ENCODE measurements at regions of chr11 and their contacts with region 1.

Region 1: GRCh38 chr11:102451681-102452460 is 694 bp downstream of the TMEM123 start:
- DNase-seq: peak; percentile 70
- H3K4me3 ChIP-seq: peak overlapping the region; percentile 72 to 98 (median 91)
- H3K27ac ChIP-seq: peak overlapping the region; percentile 83
- H3K4me1 ChIP-seq: peaks cover 55% of the 10 kb centered on the region
- H3K27me3 ChIP-seq: no peaks in the 10 kb centered on the region
- CTCF ChIP-seq: no peak
- POLR2A ChIP-seq: no peak

Region 2: GRCh38 chr11:102109896-102110760 is 341.7 kb before region 1 on chr11 and contains the start of gene YAP1:
- CTCF ChIA-PET with region 1: no interaction called
- POLR2A ChIA-PET with region 1: no interaction called
- dilution Hi-C with region 1: no loop called
- intact Hi-C with region 1: loop called (anchors 2 kb)
- DNase-seq: peak; percentile 89
- H3K4me3 ChIP-seq: peak within 1 kb of the TSS; percentile 85 to 99 (median 88)
- H3K27ac ChIP-seq: peak within 1 kb of the TSS; percentile 72
- H3K4me1 ChIP-seq: peaks cover 11% of the 10 kb centered on the region
- H3K27me3 ChIP-seq: peaks cover 2 to 18% of the 10 kb centered on the region in 2 experiments
- CTCF ChIP-seq: no peak
- POLR2A ChIP-seq: no peak
- total RNA-seq, gene YAP1: 36.5 and 48.9 TPM in 2 replicates

Region 3: GRCh38 chr11:102390667-102391465 is 61.0 kb before region 1 on chr11:
- CTCF ChIA-PET with region 1: interaction called, 16 read pairs
- POLR2A ChIA-PET with region 1: no interaction called
- dilution Hi-C with region 1: no loop called
- intact Hi-C with region 1: loop called (anchors 5 kb)
- DNase-seq: peak; percentile 63
- H3K4me3 ChIP-seq: no peak overlapping the region
- H3K27ac ChIP-seq: no peak overlapping the region
- H3K4me1 ChIP-seq: peaks cover under 1% of the 10 kb centered on the region
- H3K27me3 ChIP-seq: no peaks in the 10 kb centered on the region
- CTCF ChIP-seq: peak; percentile 83 to 88
- POLR2A ChIP-seq: no peak

Region 4: GRCh38 chr11:102399189-102399588 is 52.7 kb before region 1 on chr11:
- CTCF ChIA-PET with region 1: no interaction called
- POLR2A ChIA-PET with region 1: no interaction called
- dilution Hi-C with region 1: no loop called
- intact Hi-C with region 1: loop called (anchors 2 kb)
- DNase-seq: no peak
- H3K4me3 ChIP-seq: no peak overlapping the region
- H3K27ac ChIP-seq: no peak overlapping the region
- H3K4me1 ChIP-seq: no peaks in the 10 kb centered on the region
- H3K27me3 ChIP-seq: no peaks in the 10 kb centered on the region
- CTCF ChIP-seq: no peak
- POLR2A ChIP-seq: no peak

Region 5: DNA sequence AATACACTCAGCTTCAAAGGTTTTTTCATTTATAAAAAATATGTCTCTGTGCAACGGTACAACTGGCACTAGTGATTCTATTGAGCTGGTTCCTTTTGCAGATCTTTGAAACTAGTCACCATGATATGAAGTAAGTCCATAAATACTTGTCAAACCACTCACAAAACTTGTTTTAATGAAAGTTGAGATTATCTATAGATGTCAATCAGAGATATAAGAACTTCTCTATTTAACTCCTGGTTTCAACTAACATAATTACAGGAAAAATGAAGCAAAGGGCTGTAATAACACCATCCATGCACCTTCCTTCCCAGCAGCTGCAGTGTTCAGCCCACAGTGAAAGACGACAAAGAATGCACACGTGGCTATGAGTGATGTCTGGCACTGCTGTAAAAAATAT is 44.0 kb before region 1 on chr11:
- CTCF ChIA-PET with region 1: interaction called, 3 read pairs
- POLR2A ChIA-PET with region 1: no interaction called
- dilution Hi-C with region 1: no loop called
- intact Hi-C with region 1: loop called (anchors 1 kb)
- DNase-seq: peak; percentile 44
- H3K4me3 ChIP-seq: no peak overlapping the region
- H3K27ac ChIP-seq: no peak overlapping the region
- H3K4me1 ChIP-seq: no peaks in the 10 kb centered on the region
- H3K27me3 ChIP-seq: no peaks in the 10 kb centered on the region
- CTCF ChIP-seq: no peak
- POLR2A ChIP-seq: no peak

Region 6: GRCh38 chr11:102495161-102496042 is 43.5 kb after region 1 on chr11:
- CTCF ChIA-PET with region 1: interaction called, 3 read pairs
- POLR2A ChIA-PET with region 1: no interaction called
- dilution Hi-C with region 1: no loop called
- intact Hi-C with region 1: loop called (anchors 1 kb)
- DNase-seq: peak; percentile 77
- H3K4me3 ChIP-seq: no peak overlapping the region
- H3K27ac ChIP-seq: no peak overlapping the region
- H3K4me1 ChIP-seq: peaks cover 13% of the 10 kb centered on the region
- H3K27me3 ChIP-seq: no peaks in the 10 kb centered on the region
- CTCF ChIP-seq: peak; percentile 30 to 51
- POLR2A ChIP-seq: no peak

Region 7: DNA sequence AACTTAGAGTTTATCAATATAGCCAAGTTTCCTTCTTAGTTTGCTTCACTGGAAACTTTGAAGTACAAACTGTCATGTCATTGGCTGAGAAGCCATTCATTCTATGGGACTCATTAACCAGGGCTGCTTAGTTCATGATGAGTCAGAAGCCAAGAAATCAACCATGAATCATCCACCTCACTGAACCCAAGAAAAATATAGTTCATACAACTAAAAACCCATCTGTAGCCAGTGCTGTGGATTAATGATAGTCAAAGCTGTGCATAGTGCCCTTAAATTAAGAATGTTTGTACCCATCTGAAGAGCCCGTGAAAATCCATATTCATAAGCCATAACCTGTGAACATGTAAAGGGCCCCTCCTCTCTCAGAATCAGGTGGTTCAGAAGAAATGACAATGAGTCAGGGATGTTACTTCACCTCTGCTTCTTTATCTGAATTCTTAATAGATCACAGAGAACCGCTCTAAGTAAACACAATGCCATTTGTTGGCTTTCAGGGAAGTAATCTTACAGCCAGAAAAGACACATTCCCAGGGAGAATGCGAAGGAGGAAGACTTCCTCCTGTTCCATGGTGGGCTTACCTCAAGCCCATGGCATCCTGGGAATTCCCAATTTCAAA is 147.9 kb after region 1 on chr11:
- CTCF ChIA-PET with region 1: no interaction called
- POLR2A ChIA-PET with region 1: no interaction called
- dilution Hi-C with region 1: no loop called
- intact Hi-C with region 1: loop called (anchors 5 kb)
- DNase-seq: peak; percentile 94
- H3K4me3 ChIP-seq: peak overlapping the region in 1 of 3 experiments; percentile 40
- H3K27ac ChIP-seq: peak overlapping the region; percentile 95
- H3K4me1 ChIP-seq: peaks cover 29% of the 10 kb centered on the region
- H3K27me3 ChIP-seq: no peaks in the 10 kb centered on the region
- CTCF ChIP-seq: no peak
- POLR2A ChIP-seq: peak; percentile 28